ENCODE measurements at regions of chr14 and their contacts with region 1.

Region 1: DNA sequence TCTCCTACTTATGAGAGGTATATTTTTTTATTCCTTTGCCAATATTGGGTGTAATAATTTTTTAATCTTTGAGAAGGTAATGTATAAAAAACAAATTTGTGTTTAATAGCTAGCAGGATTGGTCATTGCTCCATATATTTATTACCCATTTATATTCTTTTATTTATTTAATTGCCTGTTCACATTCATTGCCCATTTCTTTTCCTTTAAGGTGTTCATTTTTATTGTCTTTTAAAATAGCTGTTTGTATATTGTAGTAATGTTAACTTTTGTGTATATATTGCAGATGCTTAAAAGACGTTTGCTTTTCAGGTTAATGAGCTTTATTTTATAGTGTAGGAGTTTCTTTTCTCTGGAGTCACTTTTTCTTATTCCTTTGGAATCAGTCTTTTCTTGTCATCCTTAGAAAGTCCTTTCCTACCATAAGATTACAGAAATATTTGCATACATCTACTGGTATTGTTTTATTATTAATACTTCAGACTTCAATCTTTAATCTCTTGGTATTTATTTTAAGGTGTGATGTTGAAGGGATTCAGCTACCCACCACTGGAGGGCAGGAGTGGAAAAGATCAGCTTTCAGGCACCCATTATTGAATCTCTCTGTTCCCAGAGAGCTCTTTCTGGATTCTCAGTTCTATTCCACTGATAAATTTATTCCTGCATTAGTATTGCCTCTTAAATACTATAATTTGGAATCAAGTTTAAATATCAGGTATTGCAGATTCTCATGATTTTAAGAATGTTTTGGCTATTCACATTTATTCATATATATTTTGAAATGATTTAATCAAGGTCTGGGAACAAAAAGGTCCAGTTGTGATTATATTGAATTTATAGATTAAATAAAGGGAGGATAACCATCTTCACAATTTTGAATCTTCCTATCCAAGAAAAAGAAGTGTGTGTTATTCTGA is 17.3 kb downstream of the PPM1A start:
- DNase-seq: peak; percentile 44
- H3K4me3 ChIP-seq: no peak overlapping the region
- H3K27ac ChIP-seq: no peak overlapping the region
- H3K4me1 ChIP-seq: no peaks in the 10 kb centered on the region
- H3K27me3 ChIP-seq: no peaks in the 10 kb centered on the region
- CTCF ChIP-seq: peak; percentile 47 to 52
- POLR2A ChIP-seq: no peak

Region 2: GRCh38 chr14:60254176-60254575 is 12.1 kb before region 1 on chr14:
- CTCF ChIA-PET with region 1: interaction called, 17 read pairs
- POLR2A ChIA-PET with region 1: no interaction called
- dilution Hi-C with region 1: no loop called
- intact Hi-C with region 1: loop called (anchors 2 kb)
- DNase-seq: no peak
- H3K4me3 ChIP-seq: no peak overlapping the region
- H3K27ac ChIP-seq: no peak overlapping the region
- H3K4me1 ChIP-seq: peaks cover 13% of the 10 kb centered on the region
- H3K27me3 ChIP-seq: no peaks in the 10 kb centered on the region
- CTCF ChIP-seq: no peak
- POLR2A ChIP-seq: no peak

Region 3: GRCh38 chr14:60288279-60288678 is 22.0 kb after region 1 on chr14:
- CTCF ChIA-PET with region 1: interaction called, 12 read pairs
- POLR2A ChIA-PET with region 1: no interaction called
- dilution Hi-C with region 1: no loop called
- intact Hi-C with region 1: no loop called
- DNase-seq: no peak
- H3K4me3 ChIP-seq: no peak overlapping the region
- H3K27ac ChIP-seq: no peak overlapping the region
- H3K4me1 ChIP-seq: no peaks in the 10 kb centered on the region
- H3K27me3 ChIP-seq: no peaks in the 10 kb centered on the region
- CTCF ChIP-seq: no peak
- POLR2A ChIP-seq: no peak

Region 4: DNA sequence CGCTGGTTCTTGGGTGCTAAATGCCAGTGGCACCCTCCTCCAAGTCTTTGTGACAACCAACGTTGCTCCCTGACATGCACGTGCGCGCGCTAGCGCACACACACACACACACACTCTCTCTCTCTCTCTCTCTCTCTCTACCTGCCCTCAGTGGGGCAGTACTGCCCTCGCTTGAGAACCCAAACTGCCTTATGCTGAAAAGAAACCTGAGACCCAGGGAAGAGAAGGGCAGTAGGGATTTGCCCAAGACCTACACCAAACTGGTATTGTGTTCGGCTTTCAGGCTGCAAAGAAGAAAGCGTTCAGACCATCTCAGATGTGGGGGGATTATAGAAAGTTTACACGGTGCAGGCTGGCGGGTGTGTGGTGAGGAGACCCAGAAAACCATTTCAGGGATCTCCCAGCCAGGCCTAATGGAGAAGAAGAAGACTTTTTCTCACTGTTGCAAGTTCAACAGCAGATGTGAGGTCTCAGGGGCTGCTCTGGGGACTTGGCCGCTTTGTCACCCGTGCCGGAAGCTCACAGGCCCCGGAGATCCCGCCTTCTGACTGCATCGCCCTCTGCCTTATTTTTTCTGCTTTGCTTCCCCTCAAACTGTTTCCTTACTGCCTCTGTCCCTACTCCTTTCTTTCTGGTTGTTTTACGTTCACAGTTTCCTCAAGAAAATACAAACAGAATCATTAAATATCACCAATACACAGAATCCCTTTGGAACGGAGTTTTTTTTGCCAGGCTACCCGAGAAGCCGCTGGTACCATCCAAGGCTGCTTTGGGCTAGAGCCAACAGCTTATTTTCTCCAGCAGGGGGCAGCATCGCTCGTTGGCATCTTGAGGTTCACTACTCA is 65.1 kb after region 1 on chr14:
- CTCF ChIA-PET with region 1: interaction called, 67 read pairs
- POLR2A ChIA-PET with region 1: no interaction called
- dilution Hi-C with region 1: no loop called
- intact Hi-C with region 1: loop called (anchors 1 kb)
- DNase-seq: peak; percentile 78
- H3K4me3 ChIP-seq: peak overlapping the region; percentile 30 to 66 (median 41)
- H3K27ac ChIP-seq: no peak overlapping the region
- H3K4me1 ChIP-seq: peaks cover 2% of the 10 kb centered on the region
- H3K27me3 ChIP-seq: peaks cover 36 to 38% of the 10 kb centered on the region in 2 experiments
- CTCF ChIP-seq: peak; percentile 82 to 84
- POLR2A ChIP-seq: no peak

Region 5: GRCh38 chr14:60514741-60515491 is 248.6 kb after region 1 on chr14:
- CTCF ChIA-PET with region 1: interaction called, 4 read pairs
- POLR2A ChIA-PET with region 1: no interaction called
- dilution Hi-C with region 1: no loop called
- intact Hi-C with region 1: loop called (anchors 5 kb)
- DNase-seq: no peak
- H3K4me3 ChIP-seq: peak overlapping the region; percentile 11 to 40 (median 13)
- H3K27ac ChIP-seq: no peak overlapping the region
- H3K4me1 ChIP-seq: peaks cover 3% of the 10 kb centered on the region
- H3K27me3 ChIP-seq: peaks cover 63 to 96% of the 10 kb centered on the region in 2 experiments
- CTCF ChIP-seq: peak; percentile 48 to 49
- POLR2A ChIP-seq: no peak